Right ventricle myocardium inferior (tissue), 1 donor: ENCODE measurements at regions of chr10 and their contacts with region 1.

Region 1: DNA sequence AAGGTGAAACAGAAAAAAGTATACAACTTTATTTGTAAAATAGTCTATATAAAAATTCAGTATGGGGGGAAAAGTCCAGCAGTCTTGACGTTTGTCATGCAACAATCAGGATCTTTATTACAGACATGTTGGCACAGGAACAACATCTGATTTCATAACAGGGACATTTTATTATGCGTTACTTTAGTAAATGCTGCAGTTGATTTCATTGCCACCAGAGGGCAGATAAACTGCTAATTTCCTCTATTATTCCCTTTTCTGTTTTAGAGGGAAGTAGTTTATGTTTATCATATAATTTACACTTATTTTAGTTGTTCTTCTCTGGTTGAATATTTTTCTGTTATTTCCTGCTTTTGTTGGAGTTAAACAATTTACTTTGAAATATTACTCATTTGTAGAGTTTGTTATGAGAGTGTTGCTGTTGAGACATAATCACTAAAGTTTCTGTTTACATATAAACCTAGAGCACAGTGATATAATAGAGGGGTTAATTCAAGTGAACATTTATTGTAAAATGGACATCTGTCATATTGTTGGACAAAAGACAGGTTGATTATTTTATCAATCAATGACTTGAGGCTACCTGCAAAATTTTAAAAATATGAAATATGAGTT is 3.3 kb downstream of the PLXDC2 start:
- DNase-seq: no peak
- ATAC-seq: no peak

Region 2: GRCh38 chr10:19579761-19580545 is 239.6 kb before region 1 on chr10:
- intact Hi-C with region 1: no loop called
- DNase-seq: no peak
- ATAC-seq: no peak

Region 3: DNA sequence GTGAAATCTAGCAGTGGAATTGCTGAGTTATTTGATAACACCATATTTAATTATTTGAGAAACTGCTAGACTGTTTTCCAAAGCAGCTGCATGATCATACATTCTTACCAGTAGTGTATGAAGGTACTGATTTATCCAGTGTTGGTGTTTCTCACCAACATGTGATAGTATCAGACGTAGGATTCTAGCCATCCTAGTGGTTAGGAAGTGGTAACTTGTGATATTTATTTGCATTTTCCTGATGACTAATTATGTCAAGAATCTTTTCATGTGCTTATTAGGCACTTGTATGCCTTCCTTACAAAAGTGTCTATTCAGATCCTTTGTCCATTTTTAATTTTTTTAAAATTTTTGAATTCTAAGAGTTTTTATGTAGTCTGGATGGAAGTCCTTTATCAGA is 57.5 kb before region 1 on chr10:
- intact Hi-C with region 1: no loop called
- DNase-seq: no peak
- ATAC-seq: no peak

Region 4: GRCh38 chr10:19944911-19945663 is 125.6 kb after region 1 on chr10:
- intact Hi-C with region 1: loop called (anchors 5 kb)
- DNase-seq: no peak
- ATAC-seq: peak; percentile 82

Region 5: DNA sequence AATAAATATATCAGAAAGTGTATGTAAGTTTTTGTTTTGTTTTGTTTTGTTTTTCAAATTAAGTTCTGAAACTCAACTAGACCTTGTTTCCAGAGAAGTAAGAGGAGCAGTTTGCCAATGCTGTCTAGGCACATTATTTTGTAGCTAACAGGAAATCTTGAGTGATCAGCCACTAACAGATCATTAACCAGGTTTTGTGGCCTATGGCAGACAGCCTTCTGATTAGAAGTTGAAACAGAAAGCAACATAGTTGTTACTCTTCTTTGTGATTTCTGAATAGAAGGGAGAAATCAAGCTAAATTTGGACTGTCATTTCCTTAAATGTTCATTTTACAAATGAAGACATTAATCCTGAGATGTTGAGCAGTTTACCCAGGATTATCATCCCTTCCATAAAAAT is 139.3 kb after region 1 on chr10:
- intact Hi-C with region 1: no loop called
- DNase-seq: no peak
- ATAC-seq: no peak

Region 6: GRCh38 chr10:20007426-20007825 is 187.9 kb after region 1 on chr10:
- intact Hi-C with region 1: loop called (anchors 5 kb)
- DNase-seq: no peak
- ATAC-seq: no peak

Region 7: GRCh38 chr10:20085115-20085514 is 265.6 kb after region 1 on chr10:
- intact Hi-C with region 1: loop called (anchors 10 kb)
- DNase-seq: no peak
- ATAC-seq: no peak

Region 8: DNA sequence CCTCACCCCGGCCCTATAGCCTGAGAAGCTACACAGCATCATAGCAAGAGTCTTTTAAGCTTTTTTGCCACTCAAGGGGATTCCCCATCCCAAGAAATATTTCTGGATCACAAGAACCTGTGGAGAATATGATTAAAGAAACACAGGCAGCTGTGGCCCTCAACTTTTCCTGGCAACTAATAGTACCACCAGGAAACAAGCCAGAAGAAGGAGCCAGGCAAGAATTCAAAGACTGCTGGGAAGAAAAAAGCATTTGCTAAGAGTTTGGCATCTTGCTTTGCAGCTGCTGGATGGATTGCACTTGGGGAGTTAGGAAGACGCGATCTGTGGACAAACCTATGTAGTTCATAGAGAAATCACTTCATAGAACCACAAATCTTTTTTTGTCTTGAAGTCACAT is 434.6 kb after region 1 on chr10:
- intact Hi-C with region 1: loop called (anchors 10 kb)
- DNase-seq: no peak
- ATAC-seq: peak; percentile 50

Region 9: DNA sequence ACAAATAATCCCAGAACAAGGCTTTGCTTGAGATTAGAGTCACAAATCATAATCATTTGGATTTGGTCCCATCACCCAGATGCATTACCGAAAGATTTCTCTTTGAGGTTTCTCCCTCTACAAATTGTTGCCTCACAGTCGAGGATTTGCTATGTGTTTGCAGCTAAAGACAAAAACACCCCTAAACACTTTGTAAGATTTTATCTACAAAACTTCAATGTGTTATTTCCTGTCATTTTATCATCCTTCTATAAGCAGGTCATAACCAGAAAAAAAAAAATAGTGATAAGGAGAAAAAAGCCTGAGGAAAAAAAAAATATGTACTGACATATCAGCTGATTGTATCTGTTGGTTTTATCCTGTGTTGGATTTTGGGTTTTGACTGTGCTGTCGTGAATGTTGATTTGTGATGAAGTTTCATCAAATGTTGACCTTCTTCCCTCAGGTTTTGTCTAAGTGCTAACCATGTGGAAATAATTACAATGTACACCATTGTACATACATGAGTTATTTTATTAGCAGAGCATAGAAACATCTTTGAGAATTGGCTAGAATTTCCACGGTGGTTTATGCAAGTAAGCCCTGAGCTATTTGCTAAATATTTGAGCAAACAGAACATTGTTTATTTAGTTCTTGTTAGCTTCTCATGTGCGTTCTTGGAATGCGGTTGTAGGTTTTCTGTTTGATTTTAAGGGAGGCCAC is 803.2 kb after region 1 on chr10:
- intact Hi-C with region 1: loop called (anchors 10 kb)
- DNase-seq: no peak
- ATAC-seq: no peak

Region 10: GRCh38 chr10:20768843-20769242 is 949.3 kb after region 1 on chr10:
- intact Hi-C with region 1: loop called (anchors 5 kb)
- DNase-seq: no peak
- ATAC-seq: no peak